Dendritic cell treated with granulocyte-macrophage colony-stimulating factor and Interleukin-4, amounts not matched to agents 40 ng/mL and 50 ng/mL, for 4 days (primary cell): ENCODE measurements at regions of chr9 and their contacts with region 1.

Region 1: DNA sequence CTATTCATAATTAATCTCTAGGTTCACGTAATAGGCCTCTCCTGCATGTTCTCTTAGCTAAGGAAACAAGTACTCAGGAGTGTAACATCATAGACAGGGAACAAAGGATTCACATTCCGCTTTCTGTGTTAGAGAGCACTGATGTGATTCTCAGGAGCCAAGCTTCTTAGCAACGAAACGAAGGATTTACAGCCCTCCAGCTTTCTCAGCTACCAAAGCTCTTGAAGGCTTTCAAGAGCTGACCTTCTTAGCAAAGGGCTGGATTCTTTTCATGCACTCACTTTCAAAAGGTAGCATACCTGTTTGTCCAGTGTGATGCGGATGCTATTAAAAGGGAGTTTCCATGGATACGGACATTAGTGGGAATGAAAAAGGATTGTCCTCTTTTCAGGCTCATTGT is 107.4 kb downstream of the TUSC1 start:
- H3K4me3 Mint-ChIP-seq: no peak overlapping the region
- H3K27ac Mint-ChIP-seq: no peak overlapping the region
- H3K4me1 Mint-ChIP-seq: no peaks in the 10 kb centered on the region
- H3K27me3 Mint-ChIP-seq: no peaks in the 10 kb centered on the region

Region 2: DNA sequence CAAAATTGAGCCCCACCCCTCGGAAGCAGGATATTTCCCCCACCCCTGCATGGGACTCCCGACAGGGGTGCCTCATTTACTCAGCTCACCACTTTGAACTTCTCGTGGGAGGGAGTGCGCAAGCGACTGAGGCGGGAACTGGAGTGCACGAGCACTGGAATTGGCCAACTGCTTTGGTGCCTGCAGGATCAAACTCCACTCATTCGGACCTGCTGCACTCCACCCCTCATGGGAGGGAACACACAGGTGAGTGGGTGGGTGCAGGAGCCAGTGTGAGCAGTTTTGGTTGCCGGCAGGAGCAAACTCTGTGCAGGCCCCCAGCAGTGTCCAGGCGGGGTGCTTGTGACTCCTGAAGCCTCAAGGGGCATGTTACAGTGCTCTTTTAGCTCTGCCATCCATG is 193.8 kb before region 1 on chr9:
- intact Hi-C with region 1: no loop called
- H3K4me3 Mint-ChIP-seq: no peak overlapping the region
- H3K27ac Mint-ChIP-seq: no peak overlapping the region
- H3K4me1 Mint-ChIP-seq: no peaks in the 10 kb centered on the region
- H3K27me3 Mint-ChIP-seq: no peaks in the 10 kb centered on the region

Region 3: GRCh38 chr9:25537808-25538207 is 33.0 kb before region 1 on chr9:
- intact Hi-C with region 1: no loop called
- H3K4me3 Mint-ChIP-seq: no peak overlapping the region
- H3K27ac Mint-ChIP-seq: no peak overlapping the region
- H3K4me1 Mint-ChIP-seq: no peaks in the 10 kb centered on the region
- H3K27me3 Mint-ChIP-seq: no peaks in the 10 kb centered on the region

Region 4: GRCh38 chr9:25613704-25614103 is 42.9 kb after region 1 on chr9:
- intact Hi-C with region 1: loop called (anchors 5 kb)
- H3K4me3 Mint-ChIP-seq: no peak overlapping the region
- H3K27ac Mint-ChIP-seq: no peak overlapping the region
- H3K4me1 Mint-ChIP-seq: no peaks in the 10 kb centered on the region
- H3K27me3 Mint-ChIP-seq: no peaks in the 10 kb centered on the region